Activated B cell treated with CpG ODN at 0.5 μM for 24 hours (primary cell): ENCODE measurements at regions of chr1 and their contacts with region 1.

Region 1: DNA sequence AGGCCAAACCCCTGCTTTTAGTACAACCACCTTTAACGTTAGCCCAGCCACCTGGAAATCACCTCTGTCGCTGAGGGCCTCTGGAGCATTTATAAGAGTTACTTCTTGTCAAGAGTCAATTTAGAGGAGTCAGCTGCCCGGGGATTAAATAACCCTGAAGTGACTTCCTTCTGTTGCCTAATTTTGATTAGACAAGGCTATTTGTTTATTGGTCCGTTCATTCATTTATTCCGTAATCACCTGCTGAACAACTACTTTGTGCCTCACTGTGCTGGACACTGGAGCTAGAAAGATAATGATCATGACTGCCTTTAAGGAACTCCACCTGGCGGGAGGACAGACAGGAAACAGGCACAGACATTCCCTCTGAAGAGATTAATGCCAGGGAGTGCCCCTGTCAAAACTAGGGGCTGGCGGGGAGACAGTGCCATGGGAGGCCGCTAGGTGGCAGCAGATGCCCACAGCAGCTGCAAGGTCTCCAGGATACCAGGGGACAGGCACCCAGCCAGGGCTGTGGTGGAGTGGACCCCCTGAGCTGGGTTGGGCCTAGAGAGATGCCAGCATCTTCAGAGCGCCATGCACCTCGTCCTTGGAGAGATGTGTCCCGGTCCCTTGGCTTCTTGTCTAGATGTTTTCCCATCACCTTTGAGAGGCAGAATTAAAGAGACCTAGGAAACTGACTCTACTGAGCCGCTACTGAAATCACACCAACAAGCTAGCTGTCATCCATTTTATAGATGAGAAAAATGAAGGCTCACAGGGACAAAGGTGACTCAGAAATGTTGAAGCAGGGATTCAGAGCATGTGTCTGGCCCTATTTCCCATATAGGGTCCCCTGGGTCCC is 3.7 kb downstream of the REN start:
- DNase-seq: peak; percentile 71
- ATAC-seq: peak; percentile 98
- H3K4me3 Mint-ChIP-seq: no peak overlapping the region
- H3K27ac Mint-ChIP-seq: no peak overlapping the region
- H3K4me1 Mint-ChIP-seq: no peaks in the 10 kb centered on the region
- H3K27me3 Mint-ChIP-seq: peaks cover 20% of the 10 kb centered on the region
- CTCF ChIP-seq: peak; percentile 60

Region 2: DNA sequence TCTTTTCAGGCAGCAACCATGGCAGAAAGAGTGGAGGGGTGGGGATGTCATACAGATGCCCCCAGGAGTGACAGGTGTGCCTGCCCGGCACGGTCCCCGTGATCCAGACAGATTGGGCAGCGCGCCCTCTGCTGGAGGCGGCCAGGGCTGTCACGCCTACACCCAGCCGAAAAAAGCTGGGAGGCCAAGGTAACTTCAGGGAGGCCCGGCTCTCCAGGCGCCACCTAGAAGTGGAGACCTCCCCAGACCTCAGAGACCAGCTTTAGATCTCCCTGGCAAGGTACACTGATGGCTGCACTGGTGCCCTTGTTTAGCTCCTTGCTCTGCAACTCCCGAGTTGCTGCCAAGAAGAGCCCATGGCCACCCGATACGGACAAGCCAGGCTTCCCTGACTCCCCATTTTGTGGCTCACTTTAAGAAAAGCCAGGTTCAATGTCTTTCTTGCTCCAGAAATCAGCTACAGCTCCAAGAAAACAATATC is 44.7 kb after region 1 on chr1:
- CTCF ChIA-PET with region 1: interaction called, 17 read pairs
- POLR2A ChIA-PET with region 1: no interaction called
- intact Hi-C with region 1: loop called (anchors 1 kb)
- DNase-seq: peak; percentile 62
- ATAC-seq: peak; percentile 88
- H3K4me3 Mint-ChIP-seq: no peak overlapping the region
- H3K27ac Mint-ChIP-seq: no peak overlapping the region
- H3K4me1 Mint-ChIP-seq: no peaks in the 10 kb centered on the region
- H3K27me3 Mint-ChIP-seq: peaks cover 23% of the 10 kb centered on the region
- CTCF ChIP-seq: no peak